ENCODE measurements at regions of chr17 and their contacts with region 1.

Region 1: GRCh38 chr17:58364270-58364942 is 12.4 kb upstream of the SUPT4H1 start:
- DNase-seq: no peak
- H3K4me3 ChIP-seq: no peak overlapping the region
- H3K27ac ChIP-seq: peak overlapping the region in 4 of 59 donors; percentile 1 to 53 (median 34)
- H3K27me3 ChIP-seq: no peaks in the 10 kb centered on the region
- CTCF ChIP-seq: no peak

Region 2: GRCh38 chr17:58303971-58304725 is 60.3 kb before region 1 on chr17:
- intact Hi-C with region 1: loop called in 1 of 2 experiments (anchors 10 kb)
- DNase-seq: peak in 2 of 10 donors; percentile 20 to 51
- H3K4me3 ChIP-seq: no peak overlapping the region
- H3K27ac ChIP-seq: peak overlapping the region in 12 of 59 donors; percentile 1 to 48 (median 23)
- H3K27me3 ChIP-seq: no peaks in the 10 kb centered on the region
- CTCF ChIP-seq: peak in 55 of 56 donors; percentile 33 to 74 (median 58)